ENCODE measurements at regions of chr10 and their contacts with region 1.

Region 1: DNA sequence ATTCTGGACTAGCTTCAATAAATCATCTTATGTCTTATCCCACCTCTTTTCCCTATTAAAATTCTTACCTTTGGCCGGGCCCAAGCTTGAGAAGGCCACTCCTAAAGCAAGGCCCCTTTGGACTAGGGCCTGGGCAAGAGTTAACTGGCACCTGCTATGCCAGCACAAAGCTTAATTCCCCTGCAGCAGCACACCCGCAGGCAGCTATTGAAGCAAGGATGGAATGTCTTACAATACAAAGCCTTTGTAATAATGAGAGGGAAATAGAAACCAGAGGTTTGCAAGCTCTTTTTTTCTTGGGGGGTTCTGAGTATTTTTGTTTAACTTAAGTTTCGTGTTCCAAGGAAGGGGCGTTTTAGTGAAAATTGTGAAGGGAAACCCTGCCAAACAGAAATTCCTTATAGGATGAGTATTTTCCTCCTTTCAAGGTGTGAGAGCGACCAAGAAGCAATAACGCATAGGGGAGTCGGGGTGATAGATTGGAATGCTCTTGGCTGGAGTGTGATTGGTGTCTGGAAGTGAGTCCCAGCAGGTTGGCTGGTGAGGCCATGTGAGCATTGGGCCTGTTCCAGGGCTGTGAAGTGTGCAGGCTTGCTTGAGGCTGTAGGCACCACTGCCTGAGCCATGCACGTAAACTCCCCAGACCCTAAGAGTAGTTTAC is 148.5 kb downstream of the KIAA1217 start:
- DNase-seq: peak; percentile 35
- H3K4me3 ChIP-seq: no peak overlapping the region
- CTCF ChIP-seq: no peak

Region 2: GRCh38 chr10:23994479-23995046 is 362.9 kb before region 1 on chr10:
- in situ Hi-C with region 1: loop called (anchors 5 kb)
- DNase-seq: peak; percentile 54
- H3K4me3 ChIP-seq: no peak overlapping the region
- CTCF ChIP-seq: peak; percentile 89

Region 3: GRCh38 chr10:24197263-24197662 is 160.2 kb before region 1 on chr10:
- in situ Hi-C with region 1: loop called (anchors 5 kb)
- DNase-seq: no peak
- H3K4me3 ChIP-seq: no peak overlapping the region
- CTCF ChIP-seq: no peak

Region 4: GRCh38 chr10:24307696-24308485 is 49.6 kb before region 1 on chr10:
- in situ Hi-C with region 1: loop called (anchors 5 kb)
- DNase-seq: peak; percentile 75
- H3K4me3 ChIP-seq: no peak overlapping the region
- CTCF ChIP-seq: no peak

Region 5: GRCh38 chr10:24318517-24318916 is 39.0 kb before region 1 on chr10:
- in situ Hi-C with region 1: no loop called
- DNase-seq: no peak
- H3K4me3 ChIP-seq: no peak overlapping the region
- CTCF ChIP-seq: no peak

Measured in astrocyte of the cerebellum (primary cell).